Ovary (tissue), 10 donors: ENCODE measurements at regions of chr1 and their contacts with region 1.

Region 1: DNA sequence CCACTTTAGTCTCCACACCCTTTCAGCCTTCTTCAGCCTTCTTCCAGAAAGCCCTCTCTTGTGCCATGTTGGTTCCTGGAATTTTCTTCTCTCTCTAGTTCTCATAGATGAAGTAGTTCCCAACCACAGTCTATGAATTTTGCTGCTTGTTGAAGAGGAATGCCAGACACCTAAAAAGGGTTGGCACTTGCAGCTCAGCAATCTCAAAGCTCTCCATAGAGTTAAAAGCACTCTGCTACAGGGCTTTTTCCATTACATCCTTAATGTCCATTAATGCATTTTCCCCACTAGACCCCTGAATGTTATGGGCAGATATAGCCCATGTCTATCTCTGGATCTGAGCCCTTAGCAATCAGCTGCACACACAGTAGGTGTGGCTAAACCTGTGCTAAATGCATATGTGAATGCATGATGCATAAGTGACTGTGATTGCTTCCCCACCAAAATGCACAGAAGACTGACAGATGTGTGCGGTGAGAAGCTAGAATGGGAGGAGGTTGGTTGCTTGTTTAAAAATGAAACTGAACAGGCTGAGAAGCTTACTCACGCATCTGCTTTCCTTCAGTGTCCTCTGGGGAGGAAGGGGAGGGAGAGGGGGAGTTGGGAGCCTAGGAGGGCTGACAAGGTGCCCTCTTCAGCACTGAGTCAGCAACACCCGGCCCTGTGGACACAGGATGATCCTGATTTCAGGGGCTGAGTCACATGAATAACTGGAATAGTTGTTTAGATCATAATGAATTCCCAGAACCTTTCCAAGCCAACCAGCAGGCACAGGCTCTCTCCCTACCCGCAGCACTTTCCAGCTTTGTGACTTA is 146.1 kb upstream of the FGGY start:
- DNase-seq: peak; percentile 74 to 90 (median 84)
- H3K4me3 ChIP-seq: no peak overlapping the region
- H3K27ac ChIP-seq: peak overlapping the region in 1 of 2 donors; percentile 55
- H3K4me1 ChIP-seq: peaks cover 4% of the 10 kb centered on the region
- H3K27me3 ChIP-seq: no peaks in the 10 kb centered on the region
- CTCF ChIP-seq: peak in 1 of 3 donors; percentile 15
- EP300 ChIP-seq: peak; percentile 72
- POLR2A ChIP-seq: no peak

Region 2: GRCh38 chr1:58982259-58982998 is 168.4 kb before region 1 on chr1:
- intact Hi-C with region 1: loop called in 1 of 4 experiments (anchors 10 kb)
- DNase-seq: peak in 1 of 5 donors; percentile 27
- H3K4me3 ChIP-seq: no peak overlapping the region
- H3K27ac ChIP-seq: no peak overlapping the region
- H3K4me1 ChIP-seq: peaks cover 10% of the 10 kb centered on the region
- H3K27me3 ChIP-seq: no peaks in the 10 kb centered on the region
- CTCF ChIP-seq: no peak
- EP300 ChIP-seq: no peak
- POLR2A ChIP-seq: no peak

Region 3: GRCh38 chr1:59061876-59062275 is 88.9 kb before region 1 on chr1:
- intact Hi-C with region 1: loop called in 1 of 4 experiments (anchors 10 kb)
- DNase-seq: peak; percentile 29 to 66 (median 46)
- H3K4me3 ChIP-seq: no peak overlapping the region
- H3K27ac ChIP-seq: peak overlapping the region in 1 of 2 donors; percentile 2
- H3K4me1 ChIP-seq: peaks cover 15% of the 10 kb centered on the region
- H3K27me3 ChIP-seq: no peaks in the 10 kb centered on the region
- CTCF ChIP-seq: no peak
- EP300 ChIP-seq: no peak
- POLR2A ChIP-seq: peak; percentile 37